Mammary epithelial cell (primary cell): ENCODE measurements at regions of chr18 and their contacts with region 1.

Region 1: GRCh38 chr18:63131106-63131958 is 188.2 kb downstream of the BCL2 start:
- DNase-seq: peak; percentile 32
- H3K4me3 ChIP-seq: no peak overlapping the region
- H3K27ac ChIP-seq: no peak overlapping the region
- H3K4me1 ChIP-seq: no peaks in the 10 kb centered on the region
- H3K27me3 ChIP-seq: no peaks in the 10 kb centered on the region
- CTCF ChIP-seq: peak; percentile 40 to 69

Region 2: DNA sequence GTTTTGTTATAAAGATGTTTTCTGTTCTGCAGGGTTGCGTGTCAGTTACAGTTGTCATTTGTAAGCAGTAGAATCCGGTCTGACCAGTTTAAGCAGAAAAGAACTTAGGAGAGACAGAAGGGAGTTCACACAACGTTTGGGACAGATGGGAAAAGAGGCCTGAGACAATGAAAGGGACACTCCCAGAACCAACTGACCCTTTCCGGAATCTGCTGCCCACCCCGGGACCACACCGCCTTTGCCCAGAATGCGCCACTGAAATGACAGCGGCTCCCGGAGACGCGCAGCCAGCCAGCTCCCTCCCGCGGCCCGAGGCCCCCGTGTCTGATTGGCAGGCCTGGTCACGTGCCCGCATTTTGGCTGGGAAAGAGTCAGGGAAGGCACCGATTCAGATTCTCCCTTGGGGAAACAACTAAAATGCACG is 56.3 kb before region 1 on chr18:
- CTCF ChIA-PET with region 1: no interaction called
- dilution Hi-C with region 1: no loop called
- in situ Hi-C with region 1: no loop called
- intact Hi-C with region 1: no loop called
- DNase-seq: peak; percentile 46
- H3K4me3 ChIP-seq: peak overlapping the region; percentile 56 to 62 (median 60)
- H3K27ac ChIP-seq: no peak overlapping the region
- H3K4me1 ChIP-seq: peaks cover 14% of the 10 kb centered on the region
- H3K27me3 ChIP-seq: no peaks in the 10 kb centered on the region
- CTCF ChIP-seq: no peak

Region 3: GRCh38 chr18:63207143-63207790 is 75.9 kb after region 1 on chr18:
- CTCF ChIA-PET with region 1: no interaction called
- dilution Hi-C with region 1: no loop called
- in situ Hi-C with region 1: no loop called
- intact Hi-C with region 1: loop called (anchors 10 kb)
- DNase-seq: no peak
- H3K4me3 ChIP-seq: no peak overlapping the region
- H3K27ac ChIP-seq: no peak overlapping the region
- H3K4me1 ChIP-seq: peaks cover 3% of the 10 kb centered on the region
- H3K27me3 ChIP-seq: peaks cover 3% of the 10 kb centered on the region
- CTCF ChIP-seq: no peak